SK-MEL-5 (cell line): ENCODE measurements at regions of chr19 and their contacts with region 1.

Region 1: DNA sequence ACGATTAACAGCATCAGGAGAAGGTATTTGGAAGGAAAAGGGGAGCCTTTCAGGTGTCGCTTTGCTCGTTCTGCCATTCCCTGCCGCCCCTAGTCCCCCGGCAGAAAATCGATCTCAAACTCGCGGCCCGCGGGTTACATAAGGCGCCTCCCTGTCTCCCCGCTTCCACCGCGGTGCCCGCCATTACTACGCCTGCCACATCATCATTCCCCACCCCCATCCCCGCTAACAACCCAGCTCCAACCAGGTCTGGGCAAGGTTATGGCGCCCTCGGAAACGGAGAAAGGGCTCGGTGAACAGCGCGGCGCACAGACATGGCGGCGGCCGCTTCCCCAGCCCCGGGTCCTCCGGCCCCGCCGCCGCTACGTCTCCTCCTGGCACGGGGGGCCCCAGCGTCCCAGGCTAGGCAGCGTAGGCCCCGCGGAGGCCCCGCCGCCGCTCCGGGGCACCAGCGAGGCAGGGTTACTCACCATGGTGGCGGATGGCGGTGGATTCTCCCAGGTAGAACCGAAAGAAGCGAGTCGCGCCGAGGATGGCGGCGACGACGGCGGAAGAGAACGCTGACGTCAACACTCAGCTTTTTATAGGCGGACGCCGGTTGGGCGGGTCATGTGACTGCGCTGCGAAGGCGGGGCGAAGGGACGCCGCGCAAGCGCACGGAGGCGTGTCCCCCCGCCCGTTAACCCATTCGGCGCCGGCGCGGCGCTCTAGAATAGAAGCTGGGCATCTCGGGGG is at the start of gene EEF2:
- DNase-seq: peak; percentile 78
- total RNA-seq, gene EEF2: 1,726 and 1,742 TPM in 2 replicates

Region 2: GRCh38 chr19:4208385-4209094 is 223.5 kb after region 1 on chr19:
- in situ Hi-C with region 1: loop called (anchors 25 kb)
- DNase-seq: peak; percentile 41